Activated T-helper 1 cell treated with anti-CD3 and anti-CD28 coated beads, Interleukin-12 subunit alpha, Interleukin-12 subunit beta, Interleukin-2, Interleukin-4 antibody, amounts not matched to agents 30 ng/mL and 10 ng/mL and 1 ng/mL, durations not matched to agents 14 hours and 24 hours and 36 hours (primary cell): ENCODE measurements at regions of chr11 and their contacts with region 1.

Region 1: DNA sequence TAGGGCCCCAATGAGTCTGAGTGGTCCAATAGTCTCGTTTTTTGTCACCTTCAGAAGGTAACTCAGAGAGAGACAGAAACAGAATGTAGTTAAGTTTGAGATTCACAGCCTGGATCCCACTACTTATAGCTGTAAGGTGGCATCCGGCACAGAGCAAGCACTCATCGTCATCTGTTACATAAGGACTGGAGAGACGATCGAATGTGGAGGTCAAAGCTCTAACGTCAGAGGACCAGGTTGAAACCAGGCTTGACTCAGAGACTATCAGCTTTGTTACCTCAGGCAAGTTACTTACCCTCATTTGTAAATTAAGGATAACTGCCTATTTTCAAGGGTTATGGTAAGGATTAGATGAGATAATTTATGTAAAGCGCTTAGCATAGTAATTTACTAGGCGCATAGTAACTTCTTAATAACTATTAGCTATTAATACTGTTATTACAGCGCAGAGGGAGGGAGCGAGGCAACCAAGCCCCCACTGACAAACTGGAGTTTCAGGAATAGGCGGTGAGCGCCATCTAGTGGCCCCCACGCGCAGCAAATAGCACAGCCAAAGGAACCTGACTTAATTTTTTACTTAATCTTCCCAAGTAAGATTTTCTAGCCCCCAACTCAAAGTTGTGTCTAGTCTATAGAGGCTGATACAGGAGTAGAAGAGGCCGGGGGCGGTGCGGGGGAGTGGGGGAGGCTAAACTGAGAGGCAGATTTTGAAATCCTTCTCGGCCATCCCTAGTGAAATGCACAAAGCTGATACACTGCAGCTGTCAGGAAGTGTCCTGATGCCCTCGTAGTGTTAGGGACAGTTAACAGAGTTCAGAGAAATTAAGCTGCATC is 29.0 kb upstream of the API5 start:
- DNase-seq: peak; percentile 1
- H3K4me3 Mint-ChIP-seq: no peak overlapping the region
- H3K27ac Mint-ChIP-seq: no peak overlapping the region
- H3K4me1 Mint-ChIP-seq: no peaks in the 10 kb centered on the region
- H3K27me3 Mint-ChIP-seq: no peaks in the 10 kb centered on the region

Region 2: DNA sequence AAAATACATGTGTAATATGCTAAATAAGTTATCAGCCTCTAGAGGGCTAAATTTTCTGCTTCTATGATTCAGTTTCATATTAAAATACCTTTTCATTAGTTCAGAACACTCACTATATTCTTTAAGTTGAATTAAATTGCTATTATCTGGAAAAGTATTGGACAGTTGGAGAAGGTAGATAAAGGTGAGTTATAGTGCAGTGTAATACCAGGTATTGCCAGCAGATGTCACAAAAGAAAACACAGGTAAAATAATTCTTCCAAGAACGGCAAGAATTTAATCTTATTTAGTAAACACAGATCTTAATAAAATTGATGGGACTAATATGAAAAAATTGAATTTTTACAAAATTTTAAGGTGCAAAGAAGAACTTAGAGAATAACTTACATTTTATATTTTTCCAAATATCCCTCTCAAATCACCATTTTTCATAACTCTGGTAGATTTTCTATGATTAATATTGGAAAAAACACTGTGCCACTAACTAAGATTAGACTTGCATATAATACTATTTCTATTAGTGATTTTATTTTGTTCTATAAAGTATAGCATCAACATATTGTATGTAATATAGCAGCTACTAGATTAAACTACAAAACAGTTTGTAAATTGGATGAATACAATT is 1821.7 kb before region 1 on chr11:
- intact Hi-C with region 1: loop called (anchors 2 kb)
- DNase-seq: no peak
- H3K4me3 Mint-ChIP-seq: no peak overlapping the region
- H3K27ac Mint-ChIP-seq: no peak overlapping the region
- H3K4me1 Mint-ChIP-seq: no peaks in the 10 kb centered on the region
- H3K27me3 Mint-ChIP-seq: peaks cover 4% of the 10 kb centered on the region

Region 3: DNA sequence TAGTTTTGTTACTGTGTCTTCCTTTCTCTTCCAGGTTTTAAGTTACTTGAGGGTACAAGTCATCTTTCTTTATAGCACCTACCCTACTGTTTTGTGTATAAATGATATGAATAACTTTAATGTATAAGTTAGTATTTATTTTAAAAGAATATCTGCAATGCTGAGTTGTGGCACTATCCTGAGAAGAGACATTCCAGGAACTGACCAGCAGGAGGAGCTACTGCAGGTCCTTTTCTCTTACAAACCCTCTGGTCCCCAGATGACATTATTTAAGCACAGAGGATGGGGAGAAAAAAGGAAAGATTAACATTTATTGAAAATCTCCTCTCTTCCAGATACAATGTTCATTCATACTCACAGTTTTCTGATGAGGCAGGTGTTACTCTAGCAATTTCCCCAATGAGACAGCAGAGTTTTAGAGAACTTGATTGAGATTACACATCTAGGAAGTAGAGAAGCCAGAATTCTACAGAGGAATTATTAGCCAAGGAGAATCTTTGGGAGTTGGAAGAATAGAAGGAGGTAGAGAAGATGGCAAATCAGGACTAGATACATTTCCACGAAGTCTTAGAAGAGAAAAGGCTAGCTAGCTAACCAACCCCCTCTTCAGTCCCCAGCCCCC is 512.3 kb before region 1 on chr11:
- intact Hi-C with region 1: loop called (anchors 2 kb)
- DNase-seq: no peak
- H3K4me3 Mint-ChIP-seq: no peak overlapping the region
- H3K27ac Mint-ChIP-seq: no peak overlapping the region
- H3K4me1 Mint-ChIP-seq: no peaks in the 10 kb centered on the region
- H3K27me3 Mint-ChIP-seq: no peaks in the 10 kb centered on the region

Region 4: GRCh38 chr11:45073685-45074141 is 1790.9 kb after region 1 on chr11:
- intact Hi-C with region 1: no loop called
- DNase-seq: no peak
- H3K4me3 Mint-ChIP-seq: no peak overlapping the region
- H3K27ac Mint-ChIP-seq: no peak overlapping the region
- H3K4me1 Mint-ChIP-seq: peaks cover under 1% of the 10 kb centered on the region
- H3K27me3 Mint-ChIP-seq: peaks cover 11% of the 10 kb centered on the region